Posterior vena cava (tissue), 2 donors: ENCODE measurements at regions of chr13 and their contacts with region 1.

Region 1: DNA sequence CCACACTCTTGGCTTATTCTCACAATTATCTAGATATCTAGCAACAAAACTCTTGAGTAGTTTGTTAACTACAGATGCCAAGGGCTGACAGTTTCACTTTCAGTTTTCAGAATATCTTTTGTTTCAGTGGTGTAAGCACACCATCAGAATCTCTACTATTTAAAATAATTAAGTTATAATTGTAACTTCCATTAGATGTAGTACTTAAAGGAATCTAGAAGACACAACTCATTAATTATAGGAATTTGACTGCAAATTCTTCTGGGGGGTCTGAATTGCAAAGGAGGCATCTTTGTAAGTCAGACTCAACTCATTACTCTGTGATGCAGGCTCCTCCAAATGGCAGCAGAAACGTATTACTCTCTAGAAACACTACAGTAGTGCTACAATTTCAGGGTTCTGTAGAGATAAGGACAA is 44.9 kb upstream of the USPL1 start:
- DNase-seq: no peak

Region 2: DNA sequence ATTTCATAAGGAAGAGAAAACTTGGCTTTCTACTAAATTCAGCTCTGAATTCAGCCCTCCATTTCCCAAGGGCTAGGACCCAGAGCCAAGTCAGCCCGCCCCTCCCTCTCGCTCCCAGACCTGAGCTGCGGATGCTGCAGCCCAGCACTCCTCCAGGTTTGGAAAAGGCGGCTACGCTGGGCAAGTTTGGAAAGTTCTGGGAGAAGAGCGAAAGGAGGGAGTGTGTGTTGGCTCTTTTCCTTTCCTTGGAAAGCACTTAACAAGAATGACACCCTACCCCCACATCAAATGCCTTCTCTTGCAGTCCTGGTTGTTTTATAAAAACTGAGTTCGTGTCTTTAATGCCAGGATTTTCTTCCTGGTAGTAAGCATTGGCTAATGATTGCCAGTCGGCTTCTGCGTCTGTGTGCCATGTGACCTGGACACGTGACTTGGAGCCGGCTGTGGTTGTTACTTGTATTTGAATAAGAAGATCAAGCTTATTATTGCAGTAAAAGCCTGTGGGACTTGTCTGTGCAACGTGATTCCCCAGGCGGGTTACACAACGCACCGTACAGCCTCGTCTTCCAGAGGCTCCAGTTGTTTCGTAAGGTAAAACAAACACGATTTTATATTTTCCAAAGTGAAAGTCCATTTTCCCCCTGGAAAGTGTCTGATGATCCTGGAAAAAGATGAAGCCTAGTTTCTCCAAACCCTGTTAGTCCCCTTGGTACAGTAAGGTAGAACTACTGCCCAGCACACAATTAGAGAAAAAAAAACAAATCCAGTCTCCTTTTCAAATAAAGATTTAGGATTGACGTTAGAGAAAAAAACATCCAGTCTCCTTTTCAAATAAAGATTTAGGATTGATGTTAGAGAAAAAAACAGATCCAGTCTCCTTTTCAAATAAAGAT is 177.4 kb before region 1 on chr13:
- intact Hi-C with region 1: loop called in 1 of 2 experiments (anchors 10 kb)
- DNase-seq: peak; percentile 98

Region 3: GRCh38 chr13:30696278-30697176 is 123.7 kb after region 1 on chr13:
- intact Hi-C with region 1: no loop called
- DNase-seq: no peak

Region 4: GRCh38 chr13:30818323-30818960 is 245.6 kb after region 1 on chr13:
- intact Hi-C with region 1: no loop called
- DNase-seq: peak; percentile 91